ENCODE measurements at regions of chr22 and their contacts with region 1.

Region 1: DNA sequence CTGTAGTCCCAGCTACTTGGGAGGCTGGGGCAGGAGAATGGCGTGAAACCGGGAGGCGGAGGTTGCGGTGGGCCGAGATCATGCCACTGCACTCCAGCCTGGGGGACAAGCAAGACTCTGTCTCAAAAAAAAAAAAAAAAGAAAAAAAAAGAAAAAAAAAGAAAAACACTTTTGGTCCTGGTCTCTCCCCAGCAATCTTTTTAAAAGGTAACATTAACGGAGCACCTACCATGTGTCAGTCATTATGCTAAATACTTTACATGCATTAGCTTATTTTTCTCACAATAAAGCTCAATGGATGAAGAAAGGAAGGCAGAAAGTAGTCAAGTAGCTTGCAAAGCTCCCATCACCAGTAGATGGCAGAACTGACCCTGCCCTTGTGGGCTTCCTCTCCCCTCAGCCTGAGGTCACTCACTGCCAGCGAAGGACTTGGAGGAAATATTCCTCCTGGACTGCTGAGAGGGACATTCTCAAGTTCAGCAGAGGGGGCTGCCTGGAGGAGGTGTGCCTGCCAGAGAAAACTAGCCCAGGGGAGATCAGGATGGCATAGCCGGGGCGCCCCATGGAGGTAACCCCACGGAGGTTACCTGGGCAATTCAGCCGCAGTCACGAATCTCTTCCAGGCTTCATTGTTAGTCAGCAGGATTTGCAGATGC is 15.5 kb downstream of the APOL3 start:
- DNase-seq: peak in 4 of 6 donors; percentile 45 to 65 (median 50)
- ATAC-seq: peak; percentile 81 to 97 (median 93)
- H3K4me3 ChIP-seq: no peak overlapping the region
- H3K27ac ChIP-seq: no peak overlapping the region
- H3K4me1 ChIP-seq: no peaks in the 10 kb centered on the region
- H3K27me3 ChIP-seq: no peaks in the 10 kb centered on the region
- CTCF ChIP-seq: peak in 3 of 4 donors; percentile 49 to 62 (median 52)

Region 2: GRCh38 chr22:36180038-36180880 is 35.2 kb after region 1 on chr22:
- intact Hi-C with region 1: loop called in 1 of 3 experiments (anchors 5 kb)
- DNase-seq: peak; percentile 70 to 97 (median 86)
- ATAC-seq: peak; percentile 93 to 99 (median 97)
- H3K4me3 ChIP-seq: no peak overlapping the region
- H3K27ac ChIP-seq: no peak overlapping the region
- H3K4me1 ChIP-seq: no peaks in the 10 kb centered on the region
- H3K27me3 ChIP-seq: no peaks in the 10 kb centered on the region
- CTCF ChIP-seq: peak; percentile 86 to 91 (median 89)

Measured in pancreas (tissue), 10 donors.